Common myeloid progenitor, CD34-positive (primary cell): ENCODE measurements at regions of chr21 and their contacts with region 1.

Region 1: DNA sequence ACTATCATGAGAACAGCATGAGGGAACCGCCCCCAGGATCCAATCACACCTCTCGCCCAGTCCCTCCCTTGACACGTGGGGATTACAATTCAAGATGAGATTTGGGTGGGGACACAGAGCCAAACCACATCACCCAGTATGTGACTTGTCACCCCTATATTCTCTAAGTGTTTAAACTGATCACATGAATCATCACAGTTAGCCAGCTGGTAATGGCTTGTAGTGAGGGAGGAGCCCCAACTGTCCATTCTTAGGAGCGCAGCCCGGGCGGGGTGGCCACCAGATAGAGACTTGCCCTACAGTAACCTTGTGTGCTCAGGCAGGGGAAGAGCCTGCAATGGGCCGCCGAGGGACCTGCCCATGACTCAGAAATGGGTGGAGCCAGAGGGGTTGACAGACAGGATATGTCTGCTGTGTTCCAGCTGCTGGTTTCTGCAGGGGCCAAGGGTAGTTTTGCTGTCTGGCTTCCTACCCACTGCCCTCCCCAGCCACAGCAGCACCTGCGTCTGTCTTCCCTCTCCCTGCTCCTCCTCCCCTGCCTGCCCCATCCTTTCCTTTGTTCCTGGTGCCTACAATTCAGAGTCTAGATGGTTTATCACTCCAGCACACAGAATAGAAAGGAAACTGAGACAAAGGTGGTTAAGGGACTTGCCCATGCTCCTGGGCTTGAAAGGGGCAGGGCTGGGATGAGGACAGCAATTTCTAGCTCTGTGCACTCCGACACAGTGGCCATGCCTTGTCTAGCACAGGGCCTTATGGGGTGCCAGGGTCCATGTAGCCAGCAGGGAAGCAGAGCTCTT is 9.2 kb downstream of the ABCG1 start:
- DNase-seq: peak; percentile 91 to 99 (median 98)
- H3K4me3 ChIP-seq: peak overlapping the region in 5 of 7 experiments; percentile 13 to 63 (median 32)
- H3K27ac ChIP-seq: no peak overlapping the region
- H3K4me1 ChIP-seq: peaks cover 25 to 68% (median 56%) of the 10 kb centered on the region in 4 experiments
- H3K27me3 ChIP-seq: no peaks in the 10 kb centered on the region

Region 2: DNA sequence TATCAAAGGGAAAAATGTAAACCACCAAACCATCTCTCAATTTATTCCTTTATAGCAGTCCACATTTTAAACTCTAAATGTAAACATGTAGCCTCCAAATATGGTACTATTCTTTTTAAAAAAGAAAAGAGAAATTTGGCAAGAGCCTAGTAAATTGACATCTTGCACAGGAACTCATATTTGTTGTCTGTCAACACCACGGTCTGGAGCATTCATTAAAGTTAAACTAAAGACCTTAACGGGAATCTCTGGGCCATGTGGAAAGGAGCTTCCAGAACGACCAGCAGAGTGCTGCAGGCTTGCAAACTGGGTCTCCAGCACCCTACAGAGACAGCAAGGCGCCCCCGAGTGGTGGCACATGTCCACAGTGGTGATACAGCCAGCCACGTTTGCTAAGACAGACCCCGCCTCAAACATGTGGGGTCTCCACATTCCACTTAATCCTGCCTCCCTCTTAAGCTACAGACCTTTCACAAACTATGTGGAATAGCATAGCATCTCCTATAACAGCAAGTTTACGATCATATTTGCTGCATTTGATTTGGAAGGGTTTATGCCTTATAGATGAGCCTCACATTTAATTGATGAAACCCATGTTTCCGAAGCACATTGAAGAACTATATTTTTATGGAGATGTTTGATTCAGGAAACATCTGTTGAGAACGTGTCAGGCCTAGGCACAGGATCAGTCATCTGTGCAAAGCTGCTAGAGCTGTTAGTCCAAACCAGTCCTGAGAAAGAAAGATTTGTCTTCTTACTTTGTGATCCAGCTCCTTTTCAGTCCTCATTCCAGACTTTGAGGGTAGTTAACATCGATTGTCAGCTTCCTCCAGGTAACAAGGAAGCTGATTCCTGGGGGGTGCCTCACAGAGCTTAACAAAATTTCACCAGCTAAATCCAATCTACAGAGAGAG is 1156.6 kb before region 1 on chr21:
- CTCF ChIA-PET with region 1: no interaction called
- POLR2A ChIA-PET with region 1: no interaction called
- DNase-seq: peak in 2 of 3 donors; percentile 8 to 12
- H3K4me3 ChIP-seq: no peak overlapping the region
- H3K27ac ChIP-seq: no peak overlapping the region
- H3K4me1 ChIP-seq: peaks cover 0 to 8% (median 7%) of the 10 kb centered on the region in 4 experiments
- H3K27me3 ChIP-seq: peaks cover 0 to 13% (median 7%) of the 10 kb centered on the region in 5 experiments

Region 3: GRCh38 chr21:42047821-42048613 is 180.1 kb before region 1 on chr21:
- CTCF ChIA-PET with region 1: no interaction called
- POLR2A ChIA-PET with region 1: no interaction called
- DNase-seq: peak in 1 of 3 donors; percentile 38
- H3K4me3 ChIP-seq: no peak overlapping the region
- H3K27ac ChIP-seq: no peak overlapping the region
- H3K4me1 ChIP-seq: peaks cover 3 to 24% (median 12%) of the 10 kb centered on the region in 4 experiments
- H3K27me3 ChIP-seq: no peaks in the 10 kb centered on the region

Region 4: GRCh38 chr21:42212266-42212665 is 15.8 kb before region 1 on chr21:
- CTCF ChIA-PET with region 1: no interaction called
- POLR2A ChIA-PET with region 1: no interaction called
- DNase-seq: no peak
- H3K4me3 ChIP-seq: no peak overlapping the region
- H3K27ac ChIP-seq: no peak overlapping the region
- H3K4me1 ChIP-seq: no peaks in the 10 kb centered on the region
- H3K27me3 ChIP-seq: no peaks in the 10 kb centered on the region

Region 5: GRCh38 chr21:42238185-42238934 is 10.3 kb after region 1 on chr21:
- CTCF ChIA-PET with region 1: interaction called, 17 read pairs
- POLR2A ChIA-PET with region 1: interaction called, 3 read pairs
- DNase-seq: peak in 2 of 3 donors; percentile 62 to 74
- H3K4me3 ChIP-seq: no peak overlapping the region
- H3K27ac ChIP-seq: no peak overlapping the region
- H3K4me1 ChIP-seq: peaks cover 23 to 62% (median 53%) of the 10 kb centered on the region in 4 experiments
- H3K27me3 ChIP-seq: no peaks in the 10 kb centered on the region